Transverse colon (tissue), 4 donors: ENCODE measurements at regions of chr6 and their contacts with region 1.

Region 1: GRCh38 chr6:23218751-23219150 is 649.4 kb downstream of the HDGFL1 start:
- DNase-seq: no peak
- H3K4me3 ChIP-seq: no peak overlapping the region
- H3K27ac ChIP-seq: no peak overlapping the region
- H3K4me1 ChIP-seq: no peaks in the 10 kb centered on the region
- H3K27me3 ChIP-seq: no peaks in the 10 kb centered on the region
- CTCF ChIP-seq: no peak
- EP300 ChIP-seq: no peak
- POLR2A ChIP-seq: no peak

Region 2: GRCh38 chr6:23277521-23278179 is 58.9 kb after region 1 on chr6:
- in situ Hi-C with region 1: no loop called
- intact Hi-C with region 1: loop called (anchors 2 kb)
- DNase-seq: no peak
- H3K4me3 ChIP-seq: no peak overlapping the region
- H3K27ac ChIP-seq: no peak overlapping the region
- H3K4me1 ChIP-seq: no peaks in the 10 kb centered on the region
- H3K27me3 ChIP-seq: no peaks in the 10 kb centered on the region
- CTCF ChIP-seq: no peak
- EP300 ChIP-seq: no peak
- POLR2A ChIP-seq: no peak

Region 3: DNA sequence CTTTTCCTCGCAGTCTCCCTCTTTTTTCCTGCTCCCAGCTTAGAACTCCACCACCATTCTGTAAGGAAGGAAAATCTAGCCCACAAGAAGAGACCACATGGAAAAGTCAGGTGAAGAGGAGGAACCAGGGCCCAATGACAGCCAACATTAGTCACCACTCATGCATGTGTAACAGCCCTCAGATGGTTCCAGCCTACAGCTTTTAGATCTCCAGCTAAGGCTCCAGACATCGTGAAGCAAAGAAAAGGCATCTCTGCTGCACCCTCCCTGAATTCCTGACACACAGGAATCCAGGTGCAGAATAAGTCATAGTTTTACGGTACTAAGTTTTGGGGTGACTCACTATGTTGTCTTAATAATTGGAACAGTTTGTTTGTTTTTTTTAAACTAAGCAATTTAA is 1113.6 kb after region 1 on chr6:
- in situ Hi-C with region 1: no loop called
- intact Hi-C with region 1: no loop called
- DNase-seq: no peak
- H3K4me3 ChIP-seq: no peak overlapping the region
- H3K27ac ChIP-seq: no peak overlapping the region
- H3K4me1 ChIP-seq: no peaks in the 10 kb centered on the region
- H3K27me3 ChIP-seq: no peaks in the 10 kb centered on the region
- CTCF ChIP-seq: no peak
- EP300 ChIP-seq: no peak
- POLR2A ChIP-seq: no peak